Mammary epithelial cell (primary cell): ENCODE measurements at regions of chr18 and their contacts with region 1.

Region 1: DNA sequence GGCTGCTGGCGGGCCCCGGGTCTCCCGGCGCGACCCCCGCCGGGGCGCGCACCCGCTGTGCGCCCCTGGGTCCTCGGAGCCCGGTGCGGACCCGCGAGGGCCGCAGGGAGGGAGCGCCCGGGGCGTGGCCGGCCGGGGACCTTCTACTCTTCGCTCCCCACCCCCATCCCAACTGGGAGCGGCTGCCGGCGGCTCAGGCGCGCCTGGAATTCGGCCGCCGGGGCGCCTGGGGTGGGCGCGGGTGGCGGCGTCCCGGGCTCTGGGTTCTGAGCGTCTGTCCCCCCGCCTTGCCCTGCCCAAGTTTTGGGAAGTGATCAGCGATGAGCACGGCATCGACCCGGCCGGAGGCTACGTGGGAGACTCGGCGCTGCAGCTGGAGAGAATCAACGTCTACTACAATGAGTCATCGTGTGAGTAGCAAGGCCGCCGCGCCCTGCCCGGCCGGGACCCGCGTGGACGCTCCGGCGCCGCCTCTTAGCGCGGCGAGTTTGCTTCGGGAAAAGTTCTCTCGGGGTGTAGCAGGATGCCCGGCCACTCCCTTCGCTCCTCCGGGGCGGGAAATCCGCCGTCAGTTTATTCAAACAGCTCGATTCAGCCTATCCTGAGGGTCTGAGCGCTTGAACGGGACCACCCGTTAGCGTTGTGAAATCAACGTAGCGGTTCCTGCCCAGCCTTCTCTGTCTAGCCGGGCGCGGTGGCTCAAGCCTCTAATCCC is 502 bp downstream of the TUBB6 start:
- DNase-seq: peak; percentile 79
- H3K4me3 ChIP-seq: peak overlapping the region; percentile 54 to 91 (median 71)
- H3K27ac ChIP-seq: peak overlapping the region; percentile 88
- H3K4me1 ChIP-seq: peaks cover 34% of the 10 kb centered on the region
- H3K27me3 ChIP-seq: no peaks in the 10 kb centered on the region
- CTCF ChIP-seq: no peak

Region 2: DNA sequence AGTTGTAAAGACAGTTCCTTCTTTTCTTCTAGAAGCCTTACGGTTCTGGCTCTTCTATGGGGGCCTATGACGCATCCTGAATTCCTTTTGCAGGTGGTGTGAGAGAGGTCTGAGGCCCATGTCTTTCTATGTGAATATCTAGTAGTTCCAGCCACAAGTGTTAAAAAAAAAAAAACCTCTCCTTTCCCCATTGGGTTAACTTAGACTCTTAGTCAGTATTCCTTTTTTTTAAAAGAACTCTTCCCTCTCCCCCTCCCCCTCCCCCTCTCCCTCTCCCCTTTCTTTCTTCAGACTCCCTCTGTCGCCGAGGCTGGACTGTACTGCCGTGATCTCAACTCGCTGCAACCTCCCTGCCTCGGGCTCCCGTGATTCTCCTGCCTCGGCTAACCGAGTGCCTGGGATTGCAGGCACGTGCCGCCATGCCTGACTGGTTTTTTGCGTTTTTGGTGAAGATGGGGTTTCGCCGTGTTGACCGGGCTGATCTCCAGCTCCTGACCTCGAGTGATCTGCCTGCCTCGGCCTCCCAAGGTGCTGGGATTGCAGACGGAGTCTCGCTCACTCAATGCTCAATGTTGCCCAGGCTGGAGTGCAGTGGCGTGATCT is 65.8 kb before region 1 on chr18:
- CTCF ChIA-PET with region 1: no interaction called
- dilution Hi-C with region 1: loop called (anchors 5 kb)
- in situ Hi-C with region 1: no loop called
- intact Hi-C with region 1: no loop called
- DNase-seq: no peak
- H3K4me3 ChIP-seq: no peak overlapping the region
- H3K27ac ChIP-seq: no peak overlapping the region
- H3K4me1 ChIP-seq: no peaks in the 10 kb centered on the region
- H3K27me3 ChIP-seq: no peaks in the 10 kb centered on the region
- CTCF ChIP-seq: no peak

Region 3: GRCh38 chr18:12271376-12272235 is 36.9 kb before region 1 on chr18:
- CTCF ChIA-PET with region 1: interaction called, 6 read pairs
- dilution Hi-C with region 1: no loop called
- in situ Hi-C with region 1: no loop called
- intact Hi-C with region 1: loop called (anchors 1 kb)
- DNase-seq: peak; percentile 65
- H3K4me3 ChIP-seq: peak overlapping the region; percentile 39 to 82 (median 49)
- H3K27ac ChIP-seq: peak overlapping the region; percentile 66
- H3K4me1 ChIP-seq: peaks cover 7% of the 10 kb centered on the region
- H3K27me3 ChIP-seq: no peaks in the 10 kb centered on the region
- CTCF ChIP-seq: peak; percentile 41 to 64

Region 4: DNA sequence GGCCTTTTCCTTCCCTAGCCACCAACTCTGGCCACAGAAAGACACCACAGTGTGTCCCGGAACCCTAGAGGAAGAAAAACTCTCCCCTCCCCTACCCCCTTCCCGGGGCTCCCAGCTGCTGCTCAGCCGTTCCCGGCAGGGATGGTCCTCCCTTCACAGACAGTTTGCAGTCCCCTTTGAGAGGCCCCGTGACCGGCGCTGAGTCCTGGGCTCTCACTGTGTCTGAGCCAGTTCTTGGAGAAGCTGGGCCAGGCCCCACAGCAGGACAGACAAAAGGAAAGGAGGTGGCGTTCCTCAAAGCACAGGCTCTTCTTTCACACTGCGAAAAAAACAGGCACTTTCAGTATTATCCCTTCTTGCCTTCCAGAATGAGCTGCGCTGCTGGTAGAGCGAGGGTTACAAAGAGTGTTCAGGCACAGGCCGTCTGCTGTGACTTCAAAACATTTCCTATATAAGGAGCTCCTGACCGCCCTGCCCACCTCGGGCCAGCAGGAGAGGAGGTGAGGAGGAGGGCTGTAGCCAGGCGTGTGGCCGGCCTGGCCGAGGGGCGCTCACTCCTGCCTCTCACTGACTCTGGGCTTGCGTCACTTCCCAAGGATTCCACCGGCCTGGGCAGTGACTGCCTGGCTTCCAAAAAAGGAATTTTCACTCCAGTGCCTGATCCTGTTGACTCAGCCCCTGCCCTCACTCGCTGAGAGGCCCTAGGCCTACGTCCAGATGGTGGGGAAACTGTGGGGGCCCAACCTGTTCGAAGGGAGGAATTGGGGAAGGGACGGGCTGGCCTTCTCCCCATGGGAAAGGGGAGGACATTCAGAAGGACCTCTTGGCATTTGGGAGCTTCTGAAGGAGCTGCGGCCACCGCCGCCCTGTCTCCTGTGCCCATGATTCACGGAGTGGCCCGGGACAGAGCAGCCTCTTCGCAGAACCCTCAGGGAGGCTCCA is 29.5 kb before region 1 on chr18:
- CTCF ChIA-PET with region 1: no interaction called
- dilution Hi-C with region 1: no loop called
- in situ Hi-C with region 1: no loop called
- intact Hi-C with region 1: loop called (anchors 1 kb)
- DNase-seq: peak; percentile 87
- H3K4me3 ChIP-seq: peak overlapping the region; percentile 7 to 28 (median 18)
- H3K27ac ChIP-seq: peak overlapping the region; percentile 83
- H3K4me1 ChIP-seq: peaks cover 43% of the 10 kb centered on the region
- H3K27me3 ChIP-seq: no peaks in the 10 kb centered on the region
- CTCF ChIP-seq: no peak

Region 5: DNA sequence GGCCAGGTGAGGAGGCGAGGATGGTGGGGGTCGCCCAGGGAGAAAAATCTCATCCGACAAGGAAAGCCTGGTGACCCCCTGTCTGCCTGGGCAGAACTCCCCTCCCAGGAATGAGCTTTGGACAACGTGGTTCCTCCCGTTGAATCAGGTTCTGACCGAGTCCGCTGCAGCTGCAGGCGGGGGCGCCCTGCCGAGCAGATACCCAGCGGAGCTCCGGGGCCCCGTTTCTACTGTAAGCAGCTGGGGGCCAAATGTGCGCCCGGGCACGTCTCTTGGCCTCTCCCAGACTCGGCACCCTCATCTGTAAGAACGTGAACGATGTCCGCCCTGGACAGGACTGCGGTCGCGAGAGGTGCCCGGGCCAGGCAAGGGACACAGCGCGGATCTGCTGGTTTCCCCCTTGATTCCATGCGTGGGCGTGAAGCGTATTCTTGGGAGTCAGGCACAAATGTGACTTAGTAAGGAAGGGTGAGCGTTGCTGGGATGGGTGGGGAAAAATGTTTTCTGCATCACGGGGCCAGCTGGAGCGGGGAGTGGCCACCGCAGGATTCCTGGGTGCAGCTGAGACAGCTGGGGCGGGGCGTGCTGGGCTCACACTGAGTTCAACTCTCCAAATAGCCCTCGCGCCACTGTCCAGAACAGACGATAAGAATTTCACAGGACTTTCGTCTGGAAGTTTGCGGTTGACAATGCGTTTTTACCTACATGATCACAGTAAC is 20.7 kb before region 1 on chr18:
- CTCF ChIA-PET with region 1: interaction called, 3 read pairs
- dilution Hi-C with region 1: no loop called
- in situ Hi-C with region 1: no loop called
- intact Hi-C with region 1: loop called (anchors 1 kb)
- DNase-seq: peak; percentile 98
- H3K4me3 ChIP-seq: peak overlapping the region; percentile 46 to 67 (median 58)
- H3K27ac ChIP-seq: peak overlapping the region; percentile 97
- H3K4me1 ChIP-seq: peaks cover 30% of the 10 kb centered on the region
- H3K27me3 ChIP-seq: no peaks in the 10 kb centered on the region
- CTCF ChIP-seq: peak in 1 of 2 donors; percentile 13